HepG2 (cell line): ENCODE measurements at regions of chr4 and their contacts with region 1.

Region 1: DNA sequence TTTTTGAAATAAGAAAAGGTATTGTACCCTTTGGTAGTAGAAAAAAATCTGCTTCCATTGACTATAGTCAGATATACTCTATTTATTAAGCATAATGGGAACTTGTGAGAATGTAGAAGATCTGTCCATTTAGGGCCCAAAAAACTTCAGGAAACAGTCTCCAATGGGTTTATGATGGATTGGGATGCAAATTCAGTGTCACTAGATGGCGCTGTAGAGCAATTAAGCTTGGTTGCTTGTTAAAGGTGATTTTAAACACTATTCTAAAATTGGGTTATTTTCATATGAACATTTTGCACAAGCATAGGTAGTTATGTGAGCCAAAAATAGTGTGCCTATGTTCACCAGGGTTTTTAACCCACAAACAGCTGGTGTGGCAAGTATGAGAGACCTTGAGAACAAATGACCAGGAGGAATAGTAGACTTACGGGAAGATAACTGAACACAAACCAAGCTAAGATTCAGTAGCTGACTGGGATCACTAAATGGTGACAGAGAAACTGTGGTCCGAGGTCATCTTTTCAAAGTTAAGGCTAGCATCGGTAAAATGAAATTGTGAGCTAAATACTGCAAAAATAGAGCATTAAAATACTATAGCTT is 80.3 kb upstream of the LSM6 start:
- DNase-seq: peak; percentile 32
- ATAC-seq: no peak
- H3K4me3 ChIP-seq: no peak overlapping the region
- H3K27ac ChIP-seq: no peak overlapping the region
- H3K4me1 ChIP-seq: no peaks in the 10 kb centered on the region
- H3K27me3 ChIP-seq: 0 out of 5 replicates have a peak, but pooled peaks cover 0 to 2% of the 10 kb centered on the region in 2 experiments
- CTCF ChIP-seq: peak; percentile 65
- EP300 ChIP-seq: no peak
- POLR2A ChIP-seq: no peak
- RAD21 ChIP-seq: no peak

Region 2: DNA sequence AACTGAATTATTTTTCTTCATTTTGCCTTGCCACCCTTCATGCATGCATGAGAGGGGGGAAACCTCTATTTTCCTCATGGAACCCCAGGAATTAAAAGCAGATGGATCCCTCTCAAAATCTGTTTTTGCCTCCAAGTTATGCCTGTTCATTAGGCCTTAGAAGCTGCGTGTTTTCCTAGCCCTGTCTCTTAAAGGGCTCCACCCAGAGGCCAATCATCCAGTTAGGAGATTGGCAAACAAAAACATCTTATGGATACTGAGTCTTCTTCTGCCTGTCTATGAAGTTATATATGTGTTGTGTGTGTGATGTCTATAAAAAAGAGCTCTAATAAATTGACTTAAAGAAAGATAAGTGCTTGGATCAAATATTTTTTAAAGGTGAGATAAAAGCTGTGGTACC is 1140.1 kb before region 1 on chr4:
- CTCF ChIA-PET with region 1: no interaction called
- POLR2A ChIA-PET with region 1: no interaction called
- in situ Hi-C with region 1: no loop called
- intact Hi-C with region 1: no loop called
- DNase-seq: no peak
- ATAC-seq: peak; percentile 35; the same call in 1 of the 3 replicates
- H3K4me3 ChIP-seq: no peak overlapping the region
- H3K27ac ChIP-seq: no peak overlapping the region
- H3K4me1 ChIP-seq: no peaks in the 10 kb centered on the region
- H3K27me3 ChIP-seq: no peaks in the 10 kb centered on the region
- CTCF ChIP-seq: peak; percentile 22; the same call in 1 of the 2 replicates
- EP300 ChIP-seq: no peak
- POLR2A ChIP-seq: no peak
- RAD21 ChIP-seq: no peak

Region 3: DNA sequence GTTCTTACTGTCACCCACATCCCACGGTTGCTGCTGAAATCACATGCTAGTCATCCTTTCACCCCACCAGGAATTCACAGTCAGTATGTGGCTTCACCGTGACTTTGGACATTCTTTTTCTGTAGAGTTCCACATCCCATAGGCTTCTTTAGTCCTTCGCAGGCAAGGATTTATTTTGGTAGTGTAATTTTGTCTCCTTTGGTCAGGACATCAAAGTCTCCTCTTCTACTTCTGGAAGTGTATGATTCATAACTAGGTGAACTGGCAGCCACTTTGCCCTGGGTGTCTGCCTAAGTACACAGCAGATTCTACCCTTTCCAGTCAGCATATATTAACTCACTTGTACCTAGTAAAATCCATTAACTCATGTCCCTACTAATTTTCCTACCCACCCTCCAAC is 514.3 kb before region 1 on chr4:
- CTCF ChIA-PET with region 1: no interaction called
- POLR2A ChIA-PET with region 1: no interaction called
- in situ Hi-C with region 1: no loop called
- intact Hi-C with region 1: no loop called
- DNase-seq: no peak
- ATAC-seq: no peak
- H3K4me3 ChIP-seq: no peak overlapping the region
- H3K27ac ChIP-seq: no peak overlapping the region
- H3K4me1 ChIP-seq: no peaks in the 10 kb centered on the region
- H3K27me3 ChIP-seq: no peaks in the 10 kb centered on the region
- CTCF ChIP-seq: no peak
- EP300 ChIP-seq: no peak
- POLR2A ChIP-seq: no peak
- RAD21 ChIP-seq: no peak

Region 4: GRCh38 chr4:146059865-146060264 is 35.3 kb before region 1 on chr4:
- CTCF ChIA-PET with region 1: no interaction called
- POLR2A ChIA-PET with region 1: no interaction called
- in situ Hi-C with region 1: no loop called
- intact Hi-C with region 1: no loop called
- DNase-seq: no peak
- ATAC-seq: no peak
- H3K4me3 ChIP-seq: no peak overlapping the region
- H3K27ac ChIP-seq: no peak overlapping the region
- H3K4me1 ChIP-seq: no peaks in the 10 kb centered on the region
- H3K27me3 ChIP-seq: 0 out of 5 replicates have a peak, but pooled peaks cover 0 to 1% of the 10 kb centered on the region in 2 experiments
- CTCF ChIP-seq: no peak
- EP300 ChIP-seq: no peak
- POLR2A ChIP-seq: no peak
- RAD21 ChIP-seq: no peak

Region 5: GRCh38 chr4:146235654-146236177 is 140.5 kb after region 1 on chr4:
- CTCF ChIA-PET with region 1: no interaction called
- POLR2A ChIA-PET with region 1: no interaction called
- in situ Hi-C with region 1: no loop called
- intact Hi-C with region 1: loop called (anchors 5 kb)
- DNase-seq: no peak
- ATAC-seq: no peak
- H3K4me3 ChIP-seq: no peak overlapping the region
- H3K27ac ChIP-seq: no peak overlapping the region
- H3K4me1 ChIP-seq: peaks cover 2% of the 10 kb centered on the region; the same call in 1 of the 2 replicates
- H3K27me3 ChIP-seq: peaks cover 0 to 15% of the 10 kb centered on the region in 2 experiments; a peak in 3 of 5 replicates
- CTCF ChIP-seq: no peak
- EP300 ChIP-seq: no peak
- POLR2A ChIP-seq: no peak
- RAD21 ChIP-seq: no peak

Region 6: GRCh38 chr4:146333187-146333894 is 238.2 kb after region 1 on chr4:
- CTCF ChIA-PET with region 1: no interaction called
- POLR2A ChIA-PET with region 1: no interaction called
- in situ Hi-C with region 1: no loop called
- intact Hi-C with region 1: loop called (anchors 1 kb)
- DNase-seq: peak; percentile 7
- ATAC-seq: peak; percentile 44; the same call in 1 of the 3 replicates
- H3K4me3 ChIP-seq: no peak overlapping the region
- H3K27ac ChIP-seq: no peak overlapping the region
- H3K4me1 ChIP-seq: peaks cover 25% of the 10 kb centered on the region
- H3K27me3 ChIP-seq: no peaks in the 10 kb centered on the region
- CTCF ChIP-seq: no peak
- EP300 ChIP-seq: no peak
- POLR2A ChIP-seq: no peak
- RAD21 ChIP-seq: no peak

Region 7: GRCh38 chr4:147096667-147097604 is 1001.7 kb after region 1 on chr4:
- CTCF ChIA-PET with region 1: interaction called, 4 read pairs
- POLR2A ChIA-PET with region 1: no interaction called
- in situ Hi-C with region 1: no loop called
- intact Hi-C with region 1: loop called (anchors 10 kb)
- DNase-seq: peak; percentile 34
- ATAC-seq: peak; percentile 41; the same call in 1 of the 3 replicates
- H3K4me3 ChIP-seq: no peak overlapping the region
- H3K27ac ChIP-seq: no peak overlapping the region
- H3K4me1 ChIP-seq: no peaks in the 10 kb centered on the region
- H3K27me3 ChIP-seq: no peaks in the 10 kb centered on the region
- CTCF ChIP-seq: peak; percentile 66
- EP300 ChIP-seq: no peak
- POLR2A ChIP-seq: no peak
- RAD21 ChIP-seq: no peak